CD4-positive, alpha-beta memory T cell (primary cell): ENCODE measurements at regions of chr4 and their contacts with region 1.

Region 1: DNA sequence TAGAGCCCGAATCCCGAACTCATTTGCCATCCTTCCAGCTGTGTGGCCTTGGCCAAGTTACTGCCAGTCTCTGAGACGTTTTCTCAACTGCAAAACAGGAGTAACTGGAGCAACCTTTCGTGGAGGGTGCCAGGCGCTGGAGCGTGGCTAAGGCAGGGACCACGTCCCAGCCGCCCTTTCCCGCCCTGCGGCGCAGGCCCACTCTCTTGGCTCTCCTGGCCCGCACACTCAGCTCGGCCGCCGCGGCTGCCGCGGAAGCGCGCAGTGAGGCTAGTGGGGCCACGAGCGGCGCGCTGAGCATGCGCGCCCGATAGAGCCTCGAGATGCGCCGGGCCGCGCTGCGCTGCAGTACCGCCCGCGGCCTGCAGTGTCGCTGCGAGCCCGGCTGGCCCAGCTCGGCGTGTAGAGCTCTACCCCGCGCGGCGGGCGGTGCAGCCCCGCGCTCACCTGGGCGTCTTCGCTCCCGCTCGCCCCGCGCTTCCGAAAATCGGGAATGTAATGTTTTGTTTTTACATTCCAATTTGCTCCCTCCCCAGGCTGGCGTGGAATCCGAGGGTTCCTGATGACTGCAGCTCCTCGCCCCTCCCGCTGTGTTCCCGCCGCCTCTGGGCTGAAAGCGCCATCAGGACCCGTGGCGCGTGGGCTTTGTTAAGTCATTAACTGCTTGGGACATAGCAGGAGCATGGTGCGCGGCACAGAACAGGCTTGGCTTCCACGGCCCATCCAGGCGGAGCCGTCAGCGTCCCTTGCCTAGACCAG is 4.0 kb upstream of the ZNF518B start:
- DNase-seq: peak; percentile 54 to 83 (median 80)
- H3K4me3 ChIP-seq: peak overlapping the region in 1 of 2 donors; percentile 34
- H3K4me3 Mint-ChIP-seq: peak overlapping the region; percentile 71 to 87 (median 84)
- H3K27ac ChIP-seq: no peak overlapping the region
- H3K27ac Mint-ChIP-seq: peak overlapping the region in 4 of 7 donors; percentile 32 to 81 (median 64)
- H3K4me1 ChIP-seq: peaks cover 25% of the 10 kb centered on the region
- H3K4me1 Mint-ChIP-seq: peaks cover 11 to 34% (median 20%) of the 10 kb centered on the region in 4 donors
- H3K27me3 ChIP-seq: peaks cover 5% of the 10 kb centered on the region
- H3K27me3 Mint-ChIP-seq: peaks cover 19 to 29% of the 10 kb centered on the region in 2 donors

Region 2: DNA sequence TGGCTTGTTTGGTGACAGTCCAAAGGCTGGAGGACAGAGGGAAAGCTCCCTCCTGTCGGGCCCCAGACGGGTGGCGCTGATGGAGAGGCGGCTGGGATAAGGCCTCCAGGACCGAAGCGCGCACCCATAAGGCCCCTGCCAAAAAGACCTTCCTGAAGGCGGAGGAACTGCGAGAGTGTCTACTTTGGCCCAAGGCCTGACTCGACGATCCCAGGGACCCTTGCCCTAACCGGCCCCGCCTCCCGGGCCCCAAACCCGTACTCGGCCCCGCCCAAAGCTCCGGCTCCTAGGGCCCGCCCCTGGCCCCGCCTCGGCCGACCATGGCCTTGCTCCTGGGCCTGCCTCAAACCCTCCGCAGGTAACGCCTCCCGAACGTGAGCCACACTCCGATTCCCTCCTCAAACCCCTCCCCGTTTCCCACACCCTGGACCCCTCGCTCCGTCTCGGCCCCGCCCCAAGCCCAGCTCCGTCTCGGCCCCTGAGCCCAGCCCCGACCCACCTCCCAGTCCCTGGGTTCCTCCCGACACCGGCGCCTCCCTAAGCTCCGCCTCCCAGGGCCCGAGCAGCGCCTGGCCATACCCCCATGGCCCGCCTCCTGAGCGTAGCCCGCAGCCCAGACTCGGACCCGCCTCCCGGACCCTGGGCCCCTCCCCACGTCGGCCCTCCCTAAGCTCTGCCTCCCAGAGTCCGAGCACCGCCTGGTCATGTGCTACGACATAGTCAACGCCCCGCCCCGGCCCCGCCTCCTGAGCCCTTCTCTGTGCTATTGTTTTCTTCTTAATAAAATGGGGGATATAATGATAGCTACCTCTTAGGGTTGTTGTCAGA is 769.8 kb before region 1 on chr4:
- CTCF ChIA-PET with region 1: no interaction called
- POLR2A ChIA-PET with region 1: no interaction called
- intact Hi-C with region 1: loop called (anchors 2 kb)
- DNase-seq: peak; percentile 89 to 93 (median 91)
- H3K4me3 ChIP-seq: peak overlapping the region; percentile 44 to 67
- H3K4me3 Mint-ChIP-seq: peak overlapping the region; percentile 79 to 91 (median 89)
- H3K27ac ChIP-seq: peak overlapping the region; percentile 67
- H3K27ac Mint-ChIP-seq: peak overlapping the region; percentile 53 to 95 (median 88)
- H3K4me1 ChIP-seq: peaks cover 6% of the 10 kb centered on the region
- H3K4me1 Mint-ChIP-seq: peaks cover 14 to 27% (median 19%) of the 10 kb centered on the region in 4 donors
- H3K27me3 ChIP-seq: no peaks in the 10 kb centered on the region
- H3K27me3 Mint-ChIP-seq: peaks cover 0 to 2% of the 10 kb centered on the region in 2 donors

Region 3: DNA sequence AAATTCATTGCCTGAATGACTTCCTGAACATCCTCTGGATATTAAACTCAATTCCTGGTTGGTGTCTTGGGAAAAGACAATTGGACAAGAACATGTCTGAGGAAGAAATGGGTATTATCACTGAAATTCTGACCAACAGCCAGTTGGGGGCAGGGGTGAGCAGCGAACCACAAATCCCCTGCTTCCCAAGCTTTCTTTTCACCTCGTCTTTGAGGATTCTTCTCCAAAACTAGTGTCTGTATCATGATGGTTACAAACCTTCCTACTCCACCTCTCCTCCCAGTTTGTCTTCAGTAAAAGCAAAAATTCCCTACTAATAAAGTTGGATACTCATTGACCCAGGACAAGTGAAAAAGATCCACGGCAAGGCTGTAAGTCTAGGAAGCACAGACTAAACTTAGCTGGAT is 296.4 kb before region 1 on chr4:
- CTCF ChIA-PET with region 1: interaction called, 4 read pairs
- POLR2A ChIA-PET with region 1: no interaction called
- intact Hi-C with region 1: loop called (anchors 5 kb)
- DNase-seq: no peak
- H3K4me3 ChIP-seq: no peak overlapping the region
- H3K4me3 Mint-ChIP-seq: no peak overlapping the region
- H3K27ac ChIP-seq: no peak overlapping the region
- H3K27ac Mint-ChIP-seq: peak overlapping the region in 1 of 7 donors; percentile 29
- H3K4me1 ChIP-seq: peaks cover 35% of the 10 kb centered on the region
- H3K4me1 Mint-ChIP-seq: peaks cover 19 to 36% (median 29%) of the 10 kb centered on the region in 4 donors
- H3K27me3 ChIP-seq: no peaks in the 10 kb centered on the region
- H3K27me3 Mint-ChIP-seq: no peaks in the 10 kb centered on the region

Region 4: DNA sequence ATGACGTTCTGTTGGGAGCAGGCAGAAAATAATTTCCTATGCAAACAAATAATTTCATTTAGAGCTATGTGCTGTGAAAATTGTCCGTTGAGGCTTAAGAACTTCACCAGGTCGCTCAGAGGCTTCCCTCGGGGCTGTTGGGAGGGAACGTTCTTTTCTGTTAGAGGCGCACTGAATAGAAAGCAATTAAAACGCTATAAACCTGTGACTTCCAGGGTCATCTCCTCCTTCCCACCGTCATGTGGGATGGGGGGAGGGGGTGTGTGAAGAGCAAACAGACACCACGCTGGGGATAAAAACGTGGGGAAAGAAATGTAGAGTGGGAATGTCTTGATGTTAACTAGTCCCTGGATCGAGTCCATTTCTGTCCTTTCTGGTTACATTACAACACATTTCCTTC is 31.2 kb after region 1 on chr4:
- CTCF ChIA-PET with region 1: interaction called, 11 read pairs
- POLR2A ChIA-PET with region 1: no interaction called
- intact Hi-C with region 1: no loop called
- DNase-seq: no peak
- H3K4me3 ChIP-seq: no peak overlapping the region
- H3K4me3 Mint-ChIP-seq: no peak overlapping the region
- H3K27ac ChIP-seq: no peak overlapping the region
- H3K27ac Mint-ChIP-seq: no peak overlapping the region
- H3K4me1 ChIP-seq: no peaks in the 10 kb centered on the region
- H3K4me1 Mint-ChIP-seq: peaks cover 0 to 2% (median 0%) of the 10 kb centered on the region in 4 donors
- H3K27me3 ChIP-seq: no peaks in the 10 kb centered on the region
- H3K27me3 Mint-ChIP-seq: peaks cover 14 to 16% of the 10 kb centered on the region in 2 donors

Region 5: DNA sequence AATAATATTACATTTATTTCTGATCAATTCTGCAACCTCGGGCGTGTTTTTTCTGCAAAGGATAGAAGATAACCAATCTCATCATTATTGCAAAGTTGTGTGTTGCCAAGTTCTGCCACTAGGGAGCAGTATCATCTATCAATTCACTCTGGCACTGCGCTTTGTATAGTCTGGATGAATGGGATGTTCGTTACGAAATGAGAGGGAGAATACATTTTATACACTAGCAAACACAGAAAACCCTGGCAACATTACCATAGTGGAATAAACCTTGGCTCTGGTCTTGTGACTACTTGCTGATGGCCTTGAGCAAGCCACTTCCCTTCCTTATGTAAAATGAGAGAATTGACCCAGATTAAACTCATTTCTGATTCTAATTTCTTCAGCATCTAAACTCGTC is 93.4 kb after region 1 on chr4:
- CTCF ChIA-PET with region 1: interaction called, 16 read pairs
- POLR2A ChIA-PET with region 1: no interaction called
- intact Hi-C with region 1: no loop called
- DNase-seq: peak in 4 of 5 donors; percentile 20 to 36 (median 28)
- H3K4me3 ChIP-seq: no peak overlapping the region
- H3K4me3 Mint-ChIP-seq: peak overlapping the region in 2 of 8 donors; percentile 2 to 7
- H3K27ac ChIP-seq: no peak overlapping the region
- H3K27ac Mint-ChIP-seq: no peak overlapping the region
- H3K4me1 ChIP-seq: no peaks in the 10 kb centered on the region
- H3K4me1 Mint-ChIP-seq: peaks cover 0 to 5% (median 2%) of the 10 kb centered on the region in 4 donors
- H3K27me3 ChIP-seq: no peaks in the 10 kb centered on the region
- H3K27me3 Mint-ChIP-seq: peaks cover 10 to 11% of the 10 kb centered on the region in 2 donors